PC-9 (cell line): ENCODE measurements at regions of chr5 and their contacts with region 1.

Region 1: GRCh38 chr5:36739751-36740221 is 133.4 kb downstream of the SLC1A3 start:
- DNase-seq: peak; percentile 67 to 85
- H3K4me3 ChIP-seq: no peak overlapping the region
- H3K27ac ChIP-seq: no peak overlapping the region
- H3K4me1 ChIP-seq: peaks cover 12% of the 10 kb centered on the region
- H3K27me3 ChIP-seq: no peaks in the 10 kb centered on the region
- CTCF ChIP-seq: peak; percentile 96

Region 2: GRCh38 chr5:36870399-36871040 is 130.7 kb after region 1 on chr5:
- CTCF ChIA-PET with region 1: interaction called, 10 read pairs
- POLR2A ChIA-PET with region 1: interaction called, 7 read pairs
- intact Hi-C with region 1: loop called (anchors 1 kb)
- DNase-seq: peak in 1 of 2 experiments; percentile 71
- H3K4me3 ChIP-seq: no peak overlapping the region
- H3K27ac ChIP-seq: no peak overlapping the region
- H3K4me1 ChIP-seq: peaks cover 25% of the 10 kb centered on the region
- H3K27me3 ChIP-seq: no peaks in the 10 kb centered on the region
- CTCF ChIP-seq: peak; percentile 86

Region 3: DNA sequence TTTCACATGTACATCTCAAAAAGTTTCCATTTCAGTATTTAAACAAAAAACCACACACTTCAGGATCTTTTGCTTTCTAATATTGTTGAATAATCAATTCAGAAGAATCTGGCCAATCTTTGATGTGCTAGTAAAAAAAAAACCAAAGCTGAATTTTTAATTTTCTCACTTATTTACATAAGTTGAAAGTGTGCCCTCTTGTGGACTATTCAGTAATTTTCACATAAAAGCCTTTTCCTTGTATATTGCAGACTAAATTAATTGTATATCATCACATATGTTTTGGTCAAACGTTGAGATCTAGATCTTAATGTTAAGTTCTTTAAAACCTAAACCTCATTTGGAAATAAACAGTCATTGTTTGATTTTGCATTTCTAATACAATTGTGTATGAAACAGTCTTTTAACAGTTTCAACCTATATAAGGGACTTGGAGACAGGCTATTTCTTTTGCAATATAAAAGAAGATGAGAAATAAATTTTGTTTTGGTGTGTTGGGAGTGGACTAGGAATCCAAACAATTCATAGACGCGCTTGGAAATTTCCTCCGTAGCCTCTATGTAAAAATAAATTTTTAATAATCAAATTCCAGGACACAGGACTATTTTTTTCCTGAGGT is 204.9 kb after region 1 on chr5:
- CTCF ChIA-PET with region 1: interaction called, 3 read pairs
- POLR2A ChIA-PET with region 1: no interaction called
- intact Hi-C with region 1: loop called (anchors 1 kb)
- DNase-seq: peak in 1 of 2 experiments; percentile 67
- H3K4me3 ChIP-seq: no peak overlapping the region
- H3K27ac ChIP-seq: no peak overlapping the region
- H3K4me1 ChIP-seq: peaks cover 7% of the 10 kb centered on the region
- H3K27me3 ChIP-seq: no peaks in the 10 kb centered on the region
- CTCF ChIP-seq: peak; percentile 91

Region 4: DNA sequence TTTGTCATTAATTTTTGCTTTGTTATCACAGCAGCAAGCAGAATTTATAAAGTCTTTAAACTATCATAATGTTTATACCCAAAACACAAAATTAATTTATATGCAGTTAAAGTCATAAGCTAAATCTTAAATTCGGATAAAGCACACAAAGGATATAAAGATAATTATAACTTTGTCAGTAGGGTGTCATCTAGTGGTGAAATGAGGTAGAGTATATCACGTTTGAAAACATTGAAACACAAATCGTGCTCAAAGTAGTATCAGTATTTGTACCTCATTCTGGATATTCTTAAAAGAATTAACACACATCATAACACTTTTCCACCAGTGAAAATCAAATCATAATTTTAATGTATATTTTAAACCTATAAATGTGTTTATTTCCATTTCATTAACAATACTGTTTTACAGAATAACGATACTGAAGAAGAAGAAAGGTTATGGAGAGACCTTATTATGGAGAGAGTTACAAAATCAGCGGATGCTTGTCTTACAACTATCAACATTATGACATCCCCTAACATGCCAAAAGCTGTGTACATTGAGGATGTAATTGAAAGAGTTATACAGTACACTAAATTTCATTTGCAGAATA is 266.3 kb after region 1 on chr5:
- CTCF ChIA-PET with region 1: interaction called, 4 read pairs
- POLR2A ChIA-PET with region 1: interaction called, 4 read pairs
- intact Hi-C with region 1: loop called (anchors 1 kb)
- DNase-seq: peak in 1 of 2 experiments; percentile 53
- H3K4me3 ChIP-seq: no peak overlapping the region
- H3K27ac ChIP-seq: no peak overlapping the region
- H3K4me1 ChIP-seq: no peaks in the 10 kb centered on the region
- H3K27me3 ChIP-seq: no peaks in the 10 kb centered on the region
- CTCF ChIP-seq: peak; percentile 77

Region 5: GRCh38 chr5:37370864-37371726 is 631.3 kb after region 1 on chr5 and contains the start of gene NUP155:
- CTCF ChIA-PET with region 1: interaction called, 6 read pairs
- POLR2A ChIA-PET with region 1: no interaction called
- intact Hi-C with region 1: loop called (anchors 10 kb)
- DNase-seq: peak; percentile 91 to 96
- H3K4me3 ChIP-seq: peak within 1 kb of the TSS; percentile 95
- H3K27ac ChIP-seq: peak within 1 kb of the TSS; percentile 43
- H3K4me1 ChIP-seq: peaks cover 15% of the 10 kb centered on the region
- H3K27me3 ChIP-seq: no peaks in the 10 kb centered on the region
- CTCF ChIP-seq: no peak
- total RNA-seq, gene NUP155: 62.7 and 92.3 TPM in 2 replicates